Activated CD8-positive, alpha-beta T cell treated with anti-CD3 and anti-CD28 coated beads for 36 hours (primary cell): ENCODE measurements at regions of chr7 and their contacts with region 1.

Region 1: DNA sequence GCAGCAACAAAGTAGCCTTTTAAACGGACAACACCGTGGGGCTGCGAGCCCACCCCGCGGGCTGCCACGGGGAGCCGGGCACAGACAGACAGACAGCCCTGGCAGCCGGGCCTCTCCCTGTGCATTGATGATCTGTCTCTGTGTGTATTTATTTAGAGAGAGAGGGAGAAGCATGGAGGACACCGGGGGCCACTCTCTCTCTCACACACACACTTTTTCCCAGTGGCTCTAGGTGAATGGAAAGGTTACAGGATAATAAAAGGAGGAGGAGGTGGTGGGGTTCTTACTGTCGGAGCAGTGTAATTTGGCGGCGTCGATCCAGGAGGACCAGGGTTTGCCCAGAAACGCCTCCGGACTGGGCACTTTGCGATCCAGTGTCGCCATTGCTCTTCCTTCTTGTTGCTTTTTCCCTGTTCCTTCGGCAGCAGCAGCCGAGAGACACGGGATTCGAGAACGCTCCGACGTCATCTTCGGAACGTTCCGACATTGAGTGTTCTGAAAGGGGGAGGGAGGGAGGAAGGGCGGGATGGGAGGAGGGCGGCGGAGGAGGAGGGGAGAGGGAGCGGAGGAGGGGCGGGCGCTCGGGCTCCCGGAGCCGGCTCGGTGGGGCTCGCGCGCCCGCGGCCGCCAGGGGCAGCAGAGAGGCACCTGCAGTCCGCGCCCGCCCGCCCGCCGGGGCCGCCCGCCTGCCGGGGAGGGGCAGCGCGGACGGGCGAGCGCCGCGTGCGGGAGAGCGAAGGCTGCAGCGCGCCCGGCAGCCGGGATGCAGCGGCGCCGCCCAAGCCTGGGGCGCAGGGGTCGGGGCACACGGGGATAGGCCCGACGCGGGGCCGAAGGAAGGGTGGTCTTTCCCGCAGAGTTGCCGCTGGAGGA is at the start of gene ATXN7L1:
- DNase-seq: peak; percentile 91
- ATAC-seq: peak; percentile 91
- H3K4me3 Mint-ChIP-seq: peak within 1 kb of the TSS; percentile 87
- H3K27ac Mint-ChIP-seq: peak within 1 kb of the TSS; percentile 85
- H3K4me1 Mint-ChIP-seq: peaks cover 56% of the 10 kb centered on the region
- H3K27me3 Mint-ChIP-seq: peaks cover 1% of the 10 kb centered on the region
- CTCF ChIP-seq: peak; percentile 58
- total RNA-seq, gene ATXN7L1: 4.8 to 5.3 TPM

Region 2: GRCh38 chr7:105691733-105692564 is 184.4 kb before region 1 on chr7:
- CTCF ChIA-PET with region 1: no interaction called
- POLR2A ChIA-PET with region 1: no interaction called
- intact Hi-C with region 1: no loop called
- DNase-seq: peak; percentile 88
- ATAC-seq: peak; percentile 61
- H3K4me3 Mint-ChIP-seq: peak overlapping the region; percentile 90
- H3K27ac Mint-ChIP-seq: peak overlapping the region; percentile 95
- H3K4me1 Mint-ChIP-seq: peaks cover 38% of the 10 kb centered on the region
- H3K27me3 Mint-ChIP-seq: no peaks in the 10 kb centered on the region
- CTCF ChIP-seq: no peak

Region 3: GRCh38 chr7:105759670-105760550 is 116.4 kb before region 1 on chr7:
- CTCF ChIA-PET with region 1: interaction called, 27 read pairs
- POLR2A ChIA-PET with region 1: no interaction called
- intact Hi-C with region 1: loop called (anchors 5 kb)
- DNase-seq: peak; percentile 40
- ATAC-seq: no peak
- H3K4me3 Mint-ChIP-seq: no peak overlapping the region
- H3K27ac Mint-ChIP-seq: no peak overlapping the region
- H3K4me1 Mint-ChIP-seq: peaks cover 26% of the 10 kb centered on the region
- H3K27me3 Mint-ChIP-seq: no peaks in the 10 kb centered on the region
- CTCF ChIP-seq: peak; percentile 82

Region 4: GRCh38 chr7:105849122-105849855 is 27.0 kb before region 1 on chr7:
- CTCF ChIA-PET with region 1: interaction called, 14 read pairs
- POLR2A ChIA-PET with region 1: no interaction called
- intact Hi-C with region 1: no loop called
- DNase-seq: peak; percentile 91
- ATAC-seq: peak; percentile 97
- H3K4me3 Mint-ChIP-seq: no peak overlapping the region
- H3K27ac Mint-ChIP-seq: peak overlapping the region; percentile 79
- H3K4me1 Mint-ChIP-seq: peaks cover 51% of the 10 kb centered on the region
- H3K27me3 Mint-ChIP-seq: no peaks in the 10 kb centered on the region
- CTCF ChIP-seq: no peak

Region 5: DNA sequence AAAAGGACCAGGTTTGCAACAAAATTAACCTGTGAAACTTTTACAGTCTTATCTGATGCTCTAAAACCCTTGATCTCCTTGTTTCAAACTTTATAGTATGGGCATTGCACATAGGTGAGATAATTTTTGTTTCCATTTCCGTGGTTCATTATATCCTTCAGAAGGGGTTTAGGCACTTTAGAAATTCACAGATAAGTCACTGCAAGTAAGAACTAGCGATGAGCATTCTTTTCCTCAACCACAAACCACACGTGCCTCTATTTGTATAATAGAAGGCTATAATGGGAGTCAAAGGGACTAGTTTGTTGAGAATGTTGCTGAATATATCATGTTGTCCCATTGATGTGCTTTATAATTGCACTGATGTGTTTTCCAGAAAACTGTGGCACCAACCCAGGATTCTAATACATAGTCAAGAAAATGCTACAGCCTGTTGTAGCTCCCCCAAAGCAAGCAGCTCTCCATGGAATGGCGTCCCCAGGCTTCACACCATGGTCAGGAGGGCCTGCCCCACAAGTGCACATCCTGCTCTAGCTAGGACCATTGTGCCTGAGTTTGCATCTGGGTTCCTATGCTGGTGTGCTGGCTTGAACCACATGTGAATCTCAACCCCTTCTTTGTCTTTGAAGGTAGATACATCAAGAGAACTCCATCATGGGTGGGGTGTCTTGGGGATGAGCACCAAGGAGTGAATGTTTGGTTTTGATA is 14.1 kb after region 1 on chr7:
- CTCF ChIA-PET with region 1: interaction called, 15 read pairs
- POLR2A ChIA-PET with region 1: interaction called, 5 read pairs
- intact Hi-C with region 1: no loop called
- DNase-seq: peak; percentile 84
- ATAC-seq: peak; percentile 91
- H3K4me3 Mint-ChIP-seq: no peak overlapping the region
- H3K27ac Mint-ChIP-seq: no peak overlapping the region
- H3K4me1 Mint-ChIP-seq: peaks cover 28% of the 10 kb centered on the region
- H3K27me3 Mint-ChIP-seq: no peaks in the 10 kb centered on the region
- CTCF ChIP-seq: no peak

Region 6: GRCh38 chr7:105924945-105925344 is 48.6 kb after region 1 on chr7:
- CTCF ChIA-PET with region 1: interaction called, 10 read pairs
- POLR2A ChIA-PET with region 1: interaction called, 3 read pairs
- intact Hi-C with region 1: no loop called
- DNase-seq: peak; percentile 67
- ATAC-seq: peak; percentile 90
- H3K4me3 Mint-ChIP-seq: no peak overlapping the region
- H3K27ac Mint-ChIP-seq: peak overlapping the region; percentile 58
- H3K4me1 Mint-ChIP-seq: peaks cover 33% of the 10 kb centered on the region
- H3K27me3 Mint-ChIP-seq: peaks cover 4% of the 10 kb centered on the region
- CTCF ChIP-seq: no peak

Region 7: GRCh38 chr7:106009403-106010226 is 133.3 kb after region 1 on chr7:
- CTCF ChIA-PET with region 1: interaction called, 7 read pairs
- POLR2A ChIA-PET with region 1: no interaction called
- intact Hi-C with region 1: loop called (anchors 5 kb)
- DNase-seq: peak; percentile 86
- ATAC-seq: peak; percentile 99
- H3K4me3 Mint-ChIP-seq: no peak overlapping the region
- H3K27ac Mint-ChIP-seq: no peak overlapping the region
- H3K4me1 Mint-ChIP-seq: peaks cover 25% of the 10 kb centered on the region
- H3K27me3 Mint-ChIP-seq: peaks cover 2% of the 10 kb centered on the region
- CTCF ChIP-seq: peak; percentile 99

Region 8: DNA sequence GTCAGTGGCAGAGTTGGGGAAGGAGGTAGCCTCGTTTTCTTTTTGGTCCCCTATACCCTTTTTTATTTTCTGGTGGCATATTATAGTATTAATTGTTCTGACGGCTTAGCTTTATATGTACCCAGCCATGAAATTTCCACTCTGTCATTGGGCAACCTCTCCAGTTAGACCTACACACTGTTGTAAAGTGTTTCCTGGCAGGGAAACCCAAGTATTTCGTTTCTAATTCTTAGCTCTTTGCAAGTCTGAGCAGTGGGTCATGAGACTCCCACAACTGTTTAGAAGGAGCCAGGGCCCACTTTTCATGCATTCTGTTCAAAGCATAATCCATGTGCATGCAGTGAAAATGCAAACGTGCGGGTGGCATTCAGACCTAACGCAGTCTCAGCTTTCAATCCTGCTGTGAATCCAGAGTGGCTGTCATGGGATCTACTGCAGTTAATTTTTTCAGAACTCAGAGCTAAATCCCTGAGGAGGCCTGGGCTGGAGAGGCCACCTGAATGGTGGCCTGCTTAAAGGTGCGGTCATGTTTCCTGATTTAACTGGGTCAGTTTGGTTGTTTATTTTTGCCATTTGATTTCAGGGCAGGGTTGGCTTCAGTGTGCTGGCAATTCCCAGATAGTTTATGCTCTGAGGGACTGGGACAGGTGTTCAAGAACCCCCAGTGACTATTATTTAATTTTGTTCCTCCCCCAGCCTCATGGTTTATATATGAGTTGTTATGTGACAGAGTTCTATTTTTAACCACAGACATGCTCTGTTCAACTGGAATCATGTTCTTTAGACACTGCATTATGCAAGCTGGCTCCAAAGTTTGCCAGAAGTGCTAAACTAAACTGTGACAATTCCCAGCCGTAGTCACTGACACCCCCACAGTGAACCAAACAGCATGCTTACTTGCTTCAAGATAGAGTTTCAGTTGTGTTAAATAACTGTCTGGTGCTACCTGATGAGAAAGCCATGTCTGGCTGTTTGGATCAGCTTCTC is 263.2 kb after region 1 on chr7:
- CTCF ChIA-PET with region 1: no interaction called
- POLR2A ChIA-PET with region 1: no interaction called
- intact Hi-C with region 1: no loop called
- DNase-seq: no peak
- ATAC-seq: no peak
- H3K4me3 Mint-ChIP-seq: no peak overlapping the region
- H3K27ac Mint-ChIP-seq: no peak overlapping the region
- H3K4me1 Mint-ChIP-seq: no peaks in the 10 kb centered on the region
- H3K27me3 Mint-ChIP-seq: peaks cover 1% of the 10 kb centered on the region
- CTCF ChIP-seq: no peak